ENCODE measurements at regions of chr14 and their contacts with region 1.

Region 1: GRCh38 chr14:65287264-65288131 is 125.0 kb upstream of the FUT8 start:
- DNase-seq: peak; percentile 79
- ATAC-seq: peak; percentile 74
- H3K4me3 Mint-ChIP-seq: peak overlapping the region; percentile 85
- H3K27ac Mint-ChIP-seq: peak overlapping the region; percentile 99
- H3K4me1 Mint-ChIP-seq: peaks cover 79% of the 10 kb centered on the region
- H3K27me3 Mint-ChIP-seq: no peaks in the 10 kb centered on the region

Region 2: GRCh38 chr14:65164068-65164824 is 123.3 kb before region 1 on chr14:
- CTCF ChIA-PET with region 1: interaction called, 17 read pairs
- POLR2A ChIA-PET with region 1: interaction called, 3 read pairs
- DNase-seq: peak; percentile 67
- ATAC-seq: peak; percentile 71
- H3K4me3 Mint-ChIP-seq: no peak overlapping the region
- H3K27ac Mint-ChIP-seq: peak overlapping the region; percentile 27
- H3K4me1 Mint-ChIP-seq: peaks cover 29% of the 10 kb centered on the region
- H3K27me3 Mint-ChIP-seq: no peaks in the 10 kb centered on the region

Region 3: GRCh38 chr14:65170768-65171507 is 116.6 kb before region 1 on chr14:
- CTCF ChIA-PET with region 1: interaction called, 17 read pairs
- POLR2A ChIA-PET with region 1: no interaction called
- DNase-seq: peak; percentile 62
- ATAC-seq: peak; percentile 84
- H3K4me3 Mint-ChIP-seq: peak overlapping the region; percentile 63
- H3K27ac Mint-ChIP-seq: peak overlapping the region; percentile 50
- H3K4me1 Mint-ChIP-seq: peaks cover 32% of the 10 kb centered on the region
- H3K27me3 Mint-ChIP-seq: peaks cover 7% of the 10 kb centered on the region

Region 4: DNA sequence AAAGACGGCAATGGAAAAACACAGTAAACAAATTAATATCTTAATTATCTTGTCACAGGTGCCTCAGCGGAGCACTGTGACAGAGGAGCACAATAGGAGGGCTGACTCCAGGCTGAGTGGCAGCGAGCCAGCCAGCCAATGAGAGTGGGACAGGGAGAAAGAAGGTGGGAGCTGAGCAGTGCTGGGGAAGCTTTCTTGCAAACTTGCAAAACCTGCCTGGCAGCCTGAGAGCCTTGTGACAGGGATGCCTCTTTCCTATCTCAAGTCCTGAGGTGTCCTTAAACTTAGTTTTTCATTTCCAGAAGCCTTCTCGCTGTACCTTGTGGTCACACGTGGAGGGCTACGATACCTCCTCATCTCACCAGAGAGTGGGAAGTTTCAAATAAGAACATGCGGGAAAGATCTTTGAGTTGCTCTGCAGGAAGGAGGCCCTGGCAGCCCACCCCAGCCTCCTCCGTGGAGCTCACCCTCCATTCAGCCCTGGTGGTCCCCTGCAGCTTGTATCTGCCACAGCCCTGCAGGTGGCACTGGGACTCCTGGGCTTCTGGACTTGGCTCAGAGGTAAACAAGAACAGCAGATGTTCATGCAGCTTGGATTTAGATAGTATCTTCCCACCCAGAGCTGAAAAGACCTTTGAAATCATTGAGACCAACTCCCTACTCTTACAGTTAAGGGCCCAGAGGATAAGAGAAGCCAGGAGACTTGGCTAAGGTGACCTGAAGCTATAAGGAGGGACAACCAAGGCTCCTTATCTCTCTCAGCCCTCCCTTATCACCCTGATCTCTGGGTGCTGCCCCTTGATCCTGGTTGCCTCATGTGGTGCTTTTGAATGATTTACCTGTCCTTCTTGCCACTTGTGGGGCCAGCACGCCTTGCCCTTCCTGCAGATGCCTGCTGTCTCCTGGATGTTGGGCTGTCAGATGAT is 31.7 kb before region 1 on chr14:
- CTCF ChIA-PET with region 1: no interaction called
- POLR2A ChIA-PET with region 1: no interaction called
- DNase-seq: no peak
- ATAC-seq: peak; percentile 42
- H3K4me3 Mint-ChIP-seq: no peak overlapping the region
- H3K27ac Mint-ChIP-seq: no peak overlapping the region
- H3K4me1 Mint-ChIP-seq: peaks cover 27% of the 10 kb centered on the region
- H3K27me3 Mint-ChIP-seq: no peaks in the 10 kb centered on the region

Region 5: DNA sequence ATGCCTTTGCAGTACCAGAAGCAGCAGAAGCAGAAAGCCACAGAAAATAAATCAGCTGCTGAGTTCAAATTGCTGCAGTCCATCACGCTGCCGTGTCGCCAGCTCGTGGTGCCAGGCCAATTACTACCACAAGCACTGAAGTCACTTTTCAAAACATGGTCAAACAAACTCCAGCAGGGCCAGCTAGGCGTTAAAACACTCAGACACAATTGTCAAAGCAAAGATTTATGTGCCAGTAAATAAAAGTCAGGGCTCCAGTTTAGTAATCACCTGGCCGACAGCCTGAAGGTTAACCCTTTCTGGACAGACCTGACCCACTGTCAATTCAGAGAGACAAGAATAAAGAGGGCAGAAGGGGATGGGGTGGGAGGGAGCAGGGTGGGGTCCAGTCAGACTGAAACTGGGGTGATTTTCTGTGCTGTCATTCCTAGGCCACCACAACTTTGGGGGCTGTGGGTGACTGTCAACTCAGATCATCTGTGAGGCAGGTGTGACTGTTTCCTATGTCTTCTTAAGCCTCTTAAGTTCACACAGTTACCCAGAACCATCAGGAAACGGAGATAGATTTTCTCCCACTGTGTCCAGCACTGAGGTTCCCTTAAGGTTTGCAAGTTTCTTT is 15.2 kb after region 1 on chr14:
- CTCF ChIA-PET with region 1: interaction called, 43 read pairs
- POLR2A ChIA-PET with region 1: interaction called, 91 read pairs
- DNase-seq: peak; percentile 86
- ATAC-seq: peak; percentile 81
- H3K4me3 Mint-ChIP-seq: peak overlapping the region; percentile 44
- H3K27ac Mint-ChIP-seq: peak overlapping the region; percentile 78
- H3K4me1 Mint-ChIP-seq: peaks cover 81% of the 10 kb centered on the region
- H3K27me3 Mint-ChIP-seq: no peaks in the 10 kb centered on the region

Region 6: GRCh38 chr14:65321370-65321875 is 33.9 kb after region 1 on chr14:
- CTCF ChIA-PET with region 1: interaction called, 12 read pairs
- POLR2A ChIA-PET with region 1: interaction called, 9 read pairs
- DNase-seq: peak; percentile 62
- ATAC-seq: peak; percentile 77
- H3K4me3 Mint-ChIP-seq: peak overlapping the region; percentile 13
- H3K27ac Mint-ChIP-seq: peak overlapping the region; percentile 87
- H3K4me1 Mint-ChIP-seq: peaks cover 70% of the 10 kb centered on the region
- H3K27me3 Mint-ChIP-seq: no peaks in the 10 kb centered on the region

Region 7: DNA sequence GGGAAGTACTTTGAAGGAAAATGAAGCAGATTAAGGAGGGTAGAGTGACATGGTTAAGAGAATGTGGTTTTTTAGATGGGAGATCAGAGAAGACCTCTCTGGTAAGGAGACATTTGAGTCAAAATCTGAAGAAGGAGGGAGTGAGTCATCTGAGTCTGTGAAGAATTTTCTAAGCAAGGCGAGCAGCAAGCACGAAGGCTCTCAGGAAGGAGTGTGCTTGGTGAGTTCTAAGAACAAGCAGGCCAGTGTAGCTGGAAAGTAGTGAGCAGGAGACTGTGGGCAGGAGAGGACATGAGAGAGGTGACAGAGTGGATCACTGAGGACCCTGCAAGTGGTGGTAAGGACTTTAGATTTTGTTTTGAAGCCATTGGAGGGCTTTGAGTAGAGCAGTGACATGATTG is 48.7 kb after region 1 on chr14:
- CTCF ChIA-PET with region 1: interaction called, 12 read pairs
- POLR2A ChIA-PET with region 1: interaction called, 4 read pairs
- DNase-seq: peak; percentile 76
- ATAC-seq: peak; percentile 91
- H3K4me3 Mint-ChIP-seq: peak overlapping the region; percentile 74
- H3K27ac Mint-ChIP-seq: peak overlapping the region; percentile 93
- H3K4me1 Mint-ChIP-seq: peaks cover 73% of the 10 kb centered on the region
- H3K27me3 Mint-ChIP-seq: no peaks in the 10 kb centered on the region

Region 8: GRCh38 chr14:65359503-65359902 is 72.0 kb after region 1 on chr14:
- CTCF ChIA-PET with region 1: interaction called, 10 read pairs
- POLR2A ChIA-PET with region 1: no interaction called
- DNase-seq: no peak
- ATAC-seq: no peak
- H3K4me3 Mint-ChIP-seq: no peak overlapping the region
- H3K27ac Mint-ChIP-seq: no peak overlapping the region
- H3K4me1 Mint-ChIP-seq: peaks cover 50% of the 10 kb centered on the region
- H3K27me3 Mint-ChIP-seq: no peaks in the 10 kb centered on the region